Activated naive CD4-positive, alpha-beta T cell treated with anti-CD3 and anti-CD28 coated beads, Interleukin-2, amount 10 ng/mL, durations not matched to agents 7 days and 5 days (primary cell): ENCODE measurements at regions of chr3 and their contacts with region 1.

Region 1: DNA sequence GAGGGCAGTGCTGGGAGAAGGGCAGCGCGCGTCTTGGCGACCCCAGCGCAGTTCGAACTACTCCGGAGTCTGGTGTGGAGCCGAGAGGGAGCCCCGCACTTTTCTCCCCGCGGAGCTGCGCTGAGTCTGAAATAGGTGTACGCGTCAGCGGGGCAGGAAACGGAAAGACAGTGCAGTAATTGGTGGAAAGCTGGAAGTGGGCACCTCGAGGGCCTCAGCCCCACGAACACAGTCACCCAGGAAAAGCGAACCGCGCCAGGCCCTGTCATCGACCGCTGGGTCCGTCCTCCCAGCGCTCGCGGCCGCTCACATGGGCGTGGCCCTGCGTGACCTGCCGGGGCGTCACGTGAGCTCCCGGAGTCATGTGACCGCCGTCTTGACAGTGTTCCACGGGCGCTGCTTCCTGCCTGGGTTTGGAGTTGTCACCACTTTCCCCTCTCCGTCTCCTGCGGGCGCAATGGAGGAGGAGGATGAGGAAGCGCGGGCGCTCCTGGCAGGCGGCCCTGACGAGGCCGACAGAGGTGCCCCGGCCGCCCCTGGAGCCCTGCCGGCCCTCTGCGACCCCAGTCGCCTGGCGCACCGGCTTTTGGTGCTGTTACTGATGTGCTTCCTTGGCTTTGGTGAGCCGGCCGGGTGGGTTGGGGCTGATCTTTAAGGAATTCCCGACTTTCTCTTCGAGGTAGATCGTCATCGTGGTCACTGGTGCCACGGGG is at the start of gene MFSD1:
- DNase-seq: peak; percentile 94
- H3K4me3 Mint-ChIP-seq: peak within 1 kb of the TSS; percentile 84
- H3K27ac Mint-ChIP-seq: peak within 1 kb of the TSS; percentile 86
- H3K4me1 Mint-ChIP-seq: peaks cover 30% of the 10 kb centered on the region
- H3K27me3 Mint-ChIP-seq: peaks cover 20% of the 10 kb centered on the region

Region 2: DNA sequence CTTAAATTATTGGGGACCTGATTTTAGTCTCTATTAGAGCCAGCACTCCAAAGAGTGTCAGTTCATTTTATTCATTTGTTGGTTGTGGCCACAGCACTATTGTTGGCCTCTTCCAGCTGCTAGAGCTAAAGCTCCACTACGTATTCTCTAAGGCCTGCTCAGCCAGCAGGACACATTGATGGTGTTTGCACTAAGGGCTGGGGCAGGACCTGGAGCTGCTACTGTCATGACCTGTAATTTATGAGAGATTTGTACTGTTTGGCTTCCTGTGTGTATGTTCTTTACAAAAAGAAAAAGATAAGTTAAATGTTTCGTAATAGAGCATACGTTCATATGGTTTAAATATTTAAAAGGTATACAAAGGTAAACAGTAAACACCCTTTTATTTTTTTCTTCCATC is 149.4 kb before region 1 on chr3:
- CTCF ChIA-PET with region 1: no interaction called
- DNase-seq: no peak
- H3K4me3 Mint-ChIP-seq: no peak overlapping the region
- H3K27ac Mint-ChIP-seq: no peak overlapping the region
- H3K4me1 Mint-ChIP-seq: peaks cover 5% of the 10 kb centered on the region
- H3K27me3 Mint-ChIP-seq: no peaks in the 10 kb centered on the region

Region 3: DNA sequence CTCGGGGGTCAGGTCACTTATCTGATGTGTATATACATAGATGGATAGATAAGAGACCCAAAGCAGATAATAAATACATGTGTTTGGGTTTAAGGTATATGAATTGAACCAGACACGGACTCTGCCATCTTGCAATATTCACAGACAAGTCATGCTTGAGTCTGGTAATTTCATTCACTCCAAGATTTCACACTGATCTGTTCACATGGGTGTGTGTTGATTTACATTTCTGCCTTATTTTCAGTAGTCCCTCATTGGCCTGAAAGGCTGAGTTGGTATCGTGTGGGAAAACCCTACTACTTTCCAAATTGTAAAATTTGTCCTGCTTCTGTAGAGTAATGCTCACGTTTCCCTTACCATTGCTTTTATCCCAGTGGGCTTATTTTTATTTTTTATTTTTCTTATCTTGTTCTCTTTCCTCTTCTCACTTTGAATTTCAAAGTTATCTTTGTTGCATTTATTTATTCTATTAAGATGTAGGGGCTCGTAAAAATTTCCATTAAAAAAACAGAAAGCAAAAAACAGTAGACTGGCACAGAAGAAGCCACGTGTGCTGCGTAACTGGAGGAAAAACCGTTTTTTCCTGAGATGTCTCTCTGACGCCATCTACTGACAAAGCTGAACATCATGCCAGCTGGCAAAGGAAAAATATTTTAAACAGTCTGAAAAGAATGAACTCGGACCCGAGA is 10.8 kb before region 1 on chr3:
- CTCF ChIA-PET with region 1: interaction called, 18 read pairs
- DNase-seq: peak; percentile 47
- H3K4me3 Mint-ChIP-seq: no peak overlapping the region
- H3K27ac Mint-ChIP-seq: no peak overlapping the region
- H3K4me1 Mint-ChIP-seq: peaks cover 4% of the 10 kb centered on the region
- H3K27me3 Mint-ChIP-seq: peaks cover 11% of the 10 kb centered on the region

Region 4: DNA sequence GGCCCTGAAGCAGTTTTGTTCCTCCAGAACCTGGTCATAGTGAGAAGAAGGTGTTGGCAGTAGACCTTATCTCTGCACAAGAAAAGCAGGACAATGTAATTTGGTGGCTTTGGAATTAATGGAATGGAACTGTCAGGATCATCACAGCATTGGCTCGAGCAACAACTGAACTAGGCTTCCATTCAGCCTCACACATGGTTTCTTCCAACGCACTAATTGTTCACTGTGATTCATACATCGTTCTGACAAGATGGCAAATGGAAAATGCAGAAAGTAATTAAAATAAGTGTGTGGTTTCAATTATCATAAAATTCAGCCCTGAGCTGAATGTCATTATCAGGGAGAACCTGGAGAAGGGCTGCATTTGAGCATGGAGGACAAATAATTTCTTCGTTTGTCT is 80.6 kb after region 1 on chr3:
- CTCF ChIA-PET with region 1: no interaction called
- DNase-seq: no peak
- H3K4me3 Mint-ChIP-seq: no peak overlapping the region
- H3K27ac Mint-ChIP-seq: no peak overlapping the region
- H3K4me1 Mint-ChIP-seq: no peaks in the 10 kb centered on the region
- H3K27me3 Mint-ChIP-seq: no peaks in the 10 kb centered on the region

Region 5: DNA sequence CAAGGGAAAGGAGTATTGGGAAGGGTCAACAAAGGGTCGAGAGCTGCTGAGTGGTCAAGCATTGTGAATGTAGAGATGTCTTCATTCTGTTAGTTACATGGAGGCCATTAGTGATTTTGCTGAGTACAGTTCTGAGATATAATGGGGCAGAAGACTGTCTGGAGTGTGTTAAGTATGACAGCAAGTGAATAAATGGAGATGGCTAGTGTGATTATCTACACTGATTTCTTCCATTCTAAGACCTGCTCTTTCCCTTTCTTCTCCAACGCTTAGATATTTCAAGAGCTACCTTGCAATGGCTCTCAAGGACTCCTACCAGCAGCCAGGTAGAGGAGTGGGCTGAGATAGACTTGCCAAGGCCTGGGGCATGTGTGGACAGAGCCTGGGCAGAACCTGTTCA is 216.5 kb after region 1 on chr3:
- CTCF ChIA-PET with region 1: no interaction called
- DNase-seq: no peak
- H3K4me3 Mint-ChIP-seq: no peak overlapping the region
- H3K27ac Mint-ChIP-seq: no peak overlapping the region
- H3K4me1 Mint-ChIP-seq: no peaks in the 10 kb centered on the region
- H3K27me3 Mint-ChIP-seq: no peaks in the 10 kb centered on the region